Psoas muscle (tissue), 8 donors: ENCODE measurements at regions of chr3 and their contacts with region 1.

Region 1: GRCh38 chr3:15332405-15333098 is at the start of gene SH3BP5:
- DNase-seq: peak; percentile 83 to 85
- ATAC-seq: peak; percentile 76 to 86 (median 82)
- H3K4me3 ChIP-seq: peak within 1 kb of the TSS; percentile 90
- H3K27ac ChIP-seq: peak within 1 kb of the TSS; percentile 85
- H3K4me1 ChIP-seq: peaks cover 29% of the 10 kb centered on the region
- H3K27me3 ChIP-seq: no peaks in the 10 kb centered on the region
- CTCF ChIP-seq: peak; percentile 76
- total RNA-seq, gene SH3BP5: 14.4 to 57.1 (median 23.6) TPM

Region 2: DNA sequence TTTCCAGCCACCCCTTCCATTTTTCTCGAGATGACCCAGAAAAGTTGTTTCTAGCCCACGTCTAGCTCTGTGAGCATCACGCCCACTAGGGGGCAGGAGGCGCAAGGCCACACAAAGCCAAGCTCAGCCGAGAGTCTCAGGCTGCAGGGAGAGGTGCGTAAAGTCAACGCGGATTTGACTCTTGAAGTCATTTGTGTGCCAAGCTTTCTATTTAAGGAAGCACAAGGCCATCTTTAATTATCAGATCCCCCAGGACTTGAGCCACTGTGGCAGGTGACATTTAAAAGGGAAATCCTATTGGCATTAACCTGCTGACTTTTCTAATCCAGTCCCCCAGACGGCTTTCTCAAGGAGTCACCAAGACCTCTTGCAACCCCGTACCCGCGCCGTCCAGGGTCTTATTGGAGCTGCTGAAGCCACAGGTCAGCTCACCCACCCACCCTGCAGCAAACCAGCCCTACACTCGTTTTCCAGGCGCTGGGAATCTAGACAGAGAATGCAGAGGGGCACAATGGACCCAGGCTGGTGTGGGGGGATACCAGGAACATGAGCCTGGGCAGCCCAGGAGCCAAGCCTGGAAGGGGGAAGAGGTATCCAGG is 64.4 kb before region 1 on chr3:
- intact Hi-C with region 1: loop called (anchors 2 to 5 kb)
- DNase-seq: peak; percentile 88 to 91
- ATAC-seq: peak; percentile 80 to 91 (median 88)
- H3K4me3 ChIP-seq: peak overlapping the region; percentile 12
- H3K27ac ChIP-seq: peak overlapping the region; percentile 39
- H3K4me1 ChIP-seq: peaks cover 29% of the 10 kb centered on the region
- H3K27me3 ChIP-seq: no peaks in the 10 kb centered on the region
- CTCF ChIP-seq: peak; percentile 96

Region 3: GRCh38 chr3:15287565-15288330 is 44.8 kb before region 1 on chr3:
- intact Hi-C with region 1: loop called in 1 of 2 experiments (anchors 5 kb)
- DNase-seq: peak; percentile 72 to 82
- ATAC-seq: peak; percentile 60 to 93 (median 92)
- H3K4me3 ChIP-seq: no peak overlapping the region
- H3K27ac ChIP-seq: peak overlapping the region; percentile 27
- H3K4me1 ChIP-seq: peaks cover 22% of the 10 kb centered on the region
- H3K27me3 ChIP-seq: no peaks in the 10 kb centered on the region
- CTCF ChIP-seq: no peak

Region 4: DNA sequence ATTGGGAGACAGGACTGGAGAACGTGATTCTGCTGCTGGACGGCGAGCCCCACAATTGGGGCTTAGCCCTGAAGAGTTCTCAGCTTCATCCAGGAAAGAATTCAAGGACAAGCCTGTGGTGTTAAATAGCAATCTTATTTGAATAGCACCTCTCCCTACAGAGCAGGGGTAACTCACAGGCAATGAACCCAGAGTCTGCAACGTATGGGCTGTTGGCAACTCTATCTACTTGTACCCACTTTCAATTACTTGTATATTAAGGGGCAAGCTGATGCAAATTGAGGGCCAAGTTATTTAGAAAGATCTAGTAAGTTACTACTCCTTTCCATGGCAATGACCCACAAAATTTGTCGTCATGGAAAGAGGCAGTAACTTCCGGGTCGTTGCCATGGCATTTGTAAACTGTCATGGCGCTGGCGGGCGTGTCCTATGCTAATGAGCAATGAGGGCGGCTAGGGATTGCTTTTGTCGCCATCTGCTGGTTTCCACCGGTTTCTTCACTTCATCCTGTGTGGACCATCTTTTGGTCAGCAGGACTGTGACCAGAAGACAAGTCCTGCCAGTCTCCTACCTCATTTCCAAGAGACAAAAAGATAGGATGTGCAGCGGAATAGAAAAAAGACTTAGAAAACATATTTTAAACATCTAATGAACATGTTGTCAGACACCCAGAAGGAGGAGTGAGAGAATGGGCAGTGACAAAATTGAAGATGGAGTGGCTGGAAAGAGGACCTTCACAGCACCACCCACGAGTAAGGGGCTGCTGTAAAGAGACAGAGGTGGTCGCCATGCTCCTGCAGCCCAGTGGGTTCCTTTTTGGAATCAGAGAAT is 45.6 kb after region 1 on chr3:
- intact Hi-C with region 1: loop called (anchors 5 kb)
- DNase-seq: peak; percentile 93 to 96
- ATAC-seq: peak; percentile 98 to 100 (median 100)
- H3K4me3 ChIP-seq: peak overlapping the region; percentile 43
- H3K27ac ChIP-seq: peak overlapping the region; percentile 62
- H3K4me1 ChIP-seq: no peaks in the 10 kb centered on the region
- H3K27me3 ChIP-seq: no peaks in the 10 kb centered on the region
- CTCF ChIP-seq: peak; percentile 83

Region 5: GRCh38 chr3:15557511-15557946 is 225.0 kb after region 1 on chr3:
- intact Hi-C with region 1: no loop called
- DNase-seq: no peak
- ATAC-seq: peak; percentile 71 to 75 (median 73)
- H3K4me3 ChIP-seq: no peak overlapping the region
- H3K27ac ChIP-seq: no peak overlapping the region
- H3K4me1 ChIP-seq: no peaks in the 10 kb centered on the region
- H3K27me3 ChIP-seq: no peaks in the 10 kb centered on the region
- CTCF ChIP-seq: peak; percentile 71